ENCODE measurements at regions of chr15 and their contacts with region 1.

Region 1: DNA sequence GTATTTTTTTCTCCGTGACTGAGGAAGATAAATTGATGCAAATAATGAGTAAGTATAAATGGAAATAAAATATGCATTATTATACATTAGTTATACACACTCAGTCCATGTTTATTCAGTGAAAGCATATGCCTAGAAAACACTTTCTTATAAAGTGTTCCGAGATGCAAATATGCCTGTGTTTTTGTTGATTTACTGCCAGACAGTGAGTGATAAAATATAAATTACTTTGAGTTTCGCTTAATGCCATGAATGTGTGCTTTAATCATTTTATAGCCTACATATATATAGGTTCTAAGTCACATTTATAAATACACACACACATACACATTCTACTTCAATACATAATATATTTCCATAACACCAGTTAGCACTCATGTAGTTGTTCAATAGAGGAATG is 569.2 kb downstream of the UNC13C start:
- DNase-seq: no peak
- H3K4me3 ChIP-seq: no peak overlapping the region
- H3K4me3 Mint-ChIP-seq: no peak overlapping the region
- H3K27ac Mint-ChIP-seq: no peak overlapping the region
- H3K4me1 ChIP-seq: no peaks in the 10 kb centered on the region
- H3K4me1 Mint-ChIP-seq: no peaks in the 10 kb centered on the region
- H3K27me3 ChIP-seq: no peaks in the 10 kb centered on the region
- H3K27me3 Mint-ChIP-seq: peaks cover 4% of the 10 kb centered on the region
- CTCF ChIP-seq: no peak

Region 2: DNA sequence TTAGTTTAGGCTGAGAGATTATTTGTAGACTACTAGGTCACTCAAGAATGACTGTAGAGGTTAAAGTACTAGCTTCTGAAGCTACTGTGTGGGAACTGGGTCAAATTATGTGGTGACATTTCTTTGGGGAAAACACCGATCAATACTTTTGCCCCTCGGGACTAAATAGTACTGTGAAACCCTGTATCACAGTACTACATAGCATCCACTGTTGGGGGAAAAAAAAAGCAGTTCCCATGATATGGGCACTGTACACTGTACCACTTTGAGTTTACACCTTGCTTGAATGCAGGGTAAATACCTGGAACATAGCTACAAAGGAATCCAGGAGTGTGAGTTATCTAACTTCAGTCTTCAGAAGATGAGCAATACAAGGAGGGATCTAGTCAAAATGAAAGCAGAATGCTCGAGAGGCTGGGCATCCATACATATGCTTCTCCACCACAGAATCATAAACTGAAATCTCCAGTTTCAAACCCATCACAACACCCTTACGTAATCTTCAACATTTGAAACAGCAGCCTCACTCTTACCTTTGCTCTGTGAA is 257.8 kb before region 1 on chr15:
- CTCF ChIA-PET with region 1: no interaction called
- POLR2A ChIA-PET with region 1: no interaction called
- intact Hi-C with region 1: no loop called
- DNase-seq: no peak
- H3K4me3 ChIP-seq: no peak overlapping the region
- H3K4me3 Mint-ChIP-seq: no peak overlapping the region
- H3K27ac Mint-ChIP-seq: no peak overlapping the region
- H3K4me1 ChIP-seq: no peaks in the 10 kb centered on the region
- H3K4me1 Mint-ChIP-seq: no peaks in the 10 kb centered on the region
- H3K27me3 ChIP-seq: no peaks in the 10 kb centered on the region
- H3K27me3 Mint-ChIP-seq: no peaks in the 10 kb centered on the region
- CTCF ChIP-seq: no peak

Region 3: GRCh38 chr15:54618120-54618519 is 70.6 kb after region 1 on chr15:
- CTCF ChIA-PET with region 1: no interaction called
- POLR2A ChIA-PET with region 1: interaction called, 10 read pairs
- intact Hi-C with region 1: no loop called
- DNase-seq: no peak
- H3K4me3 ChIP-seq: no peak overlapping the region
- H3K4me3 Mint-ChIP-seq: no peak overlapping the region
- H3K27ac Mint-ChIP-seq: no peak overlapping the region
- H3K4me1 ChIP-seq: peaks cover 16% of the 10 kb centered on the region
- H3K4me1 Mint-ChIP-seq: no peaks in the 10 kb centered on the region
- H3K27me3 ChIP-seq: no peaks in the 10 kb centered on the region
- H3K27me3 Mint-ChIP-seq: no peaks in the 10 kb centered on the region
- CTCF ChIP-seq: no peak

Region 4: GRCh38 chr15:54687628-54688027 is 140.1 kb after region 1 on chr15:
- CTCF ChIA-PET with region 1: no interaction called
- POLR2A ChIA-PET with region 1: no interaction called
- intact Hi-C with region 1: no loop called
- DNase-seq: no peak
- H3K4me3 ChIP-seq: no peak overlapping the region
- H3K4me3 Mint-ChIP-seq: no peak overlapping the region
- H3K27ac Mint-ChIP-seq: no peak overlapping the region
- H3K4me1 ChIP-seq: no peaks in the 10 kb centered on the region
- H3K4me1 Mint-ChIP-seq: no peaks in the 10 kb centered on the region
- H3K27me3 ChIP-seq: no peaks in the 10 kb centered on the region
- H3K27me3 Mint-ChIP-seq: peaks cover 17% of the 10 kb centered on the region
- CTCF ChIP-seq: no peak

Region 5: DNA sequence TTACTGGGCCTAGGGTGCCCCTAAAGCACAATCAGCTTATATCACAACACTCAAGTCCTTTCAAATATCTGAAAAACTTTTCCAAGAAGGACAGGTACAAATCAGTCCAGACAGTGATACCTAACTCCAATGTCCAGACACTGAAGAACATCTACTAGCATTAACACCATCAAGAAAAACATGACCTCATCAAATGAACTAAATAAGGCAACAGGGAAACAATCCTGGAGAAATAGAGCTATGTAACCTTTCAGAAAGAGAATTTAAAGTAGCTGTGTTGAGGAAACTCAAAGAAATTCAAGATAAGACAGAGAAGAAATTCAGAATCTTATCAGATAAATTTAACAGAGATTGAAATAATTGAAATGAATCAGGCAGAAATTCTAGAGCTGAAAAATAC is 361.7 kb after region 1 on chr15:
- CTCF ChIA-PET with region 1: no interaction called
- POLR2A ChIA-PET with region 1: no interaction called
- intact Hi-C with region 1: no loop called
- DNase-seq: no peak
- H3K4me3 ChIP-seq: no peak overlapping the region
- H3K4me3 Mint-ChIP-seq: no peak overlapping the region
- H3K27ac Mint-ChIP-seq: no peak overlapping the region
- H3K4me1 ChIP-seq: no peaks in the 10 kb centered on the region
- H3K4me1 Mint-ChIP-seq: no peaks in the 10 kb centered on the region
- H3K27me3 ChIP-seq: no peaks in the 10 kb centered on the region
- H3K27me3 Mint-ChIP-seq: peaks cover 6% of the 10 kb centered on the region
- CTCF ChIP-seq: no peak

Measured in Caco-2 (cell line).